GM12878 (cell line): ENCODE measurements at regions of chr6 and their contacts with region 1.

Region 1: GRCh38 chr6:116111552-116112528 is 11.2 kb downstream of the NT5DC1 start:
- DNase-seq: no peak
- ATAC-seq: peak; percentile 90
- H3K4me3 ChIP-seq: no peak overlapping the region
- H3K27ac ChIP-seq: no peak overlapping the region
- H3K4me1 ChIP-seq: peaks cover 2% of the 10 kb centered on the region; the same call in 1 of the 2 replicates
- H3K27me3 ChIP-seq: no peaks in the 10 kb centered on the region
- CTCF ChIP-seq: peak; percentile 59 to 78 (median 74)
- EP300 ChIP-seq: no peak
- POLR2A ChIP-seq: no peak
- RAD21 ChIP-seq: peak; percentile 65

Region 2: DNA sequence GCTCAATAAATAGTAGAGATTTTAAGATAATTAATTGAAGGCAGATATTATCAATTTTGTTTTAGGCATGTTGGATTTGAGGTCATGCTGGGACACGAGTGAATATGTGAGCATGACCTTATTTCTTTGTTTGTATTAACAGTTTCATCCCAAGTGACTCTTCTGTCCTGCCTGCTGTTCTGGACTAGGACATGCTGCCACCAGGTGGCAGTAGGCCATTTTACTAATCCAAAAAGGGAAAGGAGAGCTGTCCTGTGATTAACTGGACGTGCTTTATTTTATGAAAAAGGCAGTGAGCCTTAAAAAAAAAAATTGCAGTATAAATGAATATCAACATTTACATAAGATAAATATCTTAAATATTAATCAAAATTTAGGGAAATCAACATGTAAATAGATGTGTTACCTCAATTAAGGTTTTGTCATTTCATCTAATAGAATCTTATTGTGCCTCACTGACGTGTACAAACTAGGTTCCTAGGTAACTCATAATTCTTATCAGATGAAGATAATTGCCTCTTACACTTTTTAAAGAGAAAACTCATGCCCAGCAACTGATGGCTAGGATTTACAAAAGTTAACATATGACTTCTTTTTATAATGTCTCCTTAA is 100.9 kb before region 1 on chr6:
- CTCF ChIA-PET with region 1: interaction called, 106 read pairs
- POLR2A ChIA-PET with region 1: interaction called, 7 read pairs
- RAD21 ChIA-PET with region 1: interaction called, 39 read pairs
- SMC1A ChIA-PET with region 1: interaction called, 51 read pairs
- in situ Hi-C with region 1: no loop called
- intact Hi-C with region 1: no loop called
- DNase-seq: no peak
- ATAC-seq: peak; percentile 67
- H3K4me3 ChIP-seq: peak overlapping the region; percentile 9; the same call in 1 of the 2 replicates
- H3K27ac ChIP-seq: peak overlapping the region; percentile 59
- H3K4me1 ChIP-seq: peaks cover 53% of the 10 kb centered on the region
- H3K27me3 ChIP-seq: no peaks in the 10 kb centered on the region
- CTCF ChIP-seq: peak; percentile 82 to 88 (median 84)
- EP300 ChIP-seq: no peak
- POLR2A ChIP-seq: no peak
- RAD21 ChIP-seq: peak; percentile 95

Region 3: GRCh38 chr6:116073765-116074419 is 37.9 kb before region 1 on chr6:
- CTCF ChIA-PET with region 1: interaction called, 10 read pairs
- POLR2A ChIA-PET with region 1: no interaction called
- RAD21 ChIA-PET with region 1: no interaction called
- SMC1A ChIA-PET with region 1: no interaction called
- in situ Hi-C with region 1: no loop called
- intact Hi-C with region 1: no loop called
- DNase-seq: no peak
- ATAC-seq: no peak
- H3K4me3 ChIP-seq: no peak overlapping the region
- H3K27ac ChIP-seq: no peak overlapping the region
- H3K4me1 ChIP-seq: no peaks in the 10 kb centered on the region
- H3K27me3 ChIP-seq: no peaks in the 10 kb centered on the region
- CTCF ChIP-seq: no peak
- EP300 ChIP-seq: no peak
- POLR2A ChIP-seq: no peak
- RAD21 ChIP-seq: no peak

Region 4: DNA sequence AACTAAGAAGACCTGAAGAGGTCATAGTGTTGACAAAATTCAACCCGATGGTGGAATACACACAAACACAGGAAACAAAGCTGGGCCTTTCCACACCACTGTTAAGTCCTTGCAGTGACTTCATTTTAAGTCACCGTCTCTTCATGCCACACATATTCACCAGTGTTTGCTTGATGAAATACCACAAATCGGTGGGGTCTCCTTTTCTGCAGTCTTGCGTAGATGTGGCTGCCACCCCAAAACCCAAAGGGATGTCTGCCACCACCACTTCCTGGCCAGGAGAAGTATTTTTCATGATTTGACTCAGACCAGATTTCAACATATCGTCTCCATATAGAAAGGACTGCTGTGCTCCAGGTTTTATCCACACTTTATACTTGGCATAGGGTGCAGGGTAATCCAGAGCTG is 25.1 kb after region 1 on chr6:
- CTCF ChIA-PET with region 1: interaction called, 32 read pairs
- POLR2A ChIA-PET with region 1: no interaction called
- RAD21 ChIA-PET with region 1: interaction called, 4 read pairs
- SMC1A ChIA-PET with region 1: interaction called, 5 read pairs
- in situ Hi-C with region 1: no loop called
- intact Hi-C with region 1: no loop called
- DNase-seq: no peak
- ATAC-seq: no peak
- H3K4me3 ChIP-seq: no peak overlapping the region
- H3K27ac ChIP-seq: no peak overlapping the region
- H3K4me1 ChIP-seq: no peaks in the 10 kb centered on the region
- H3K27me3 ChIP-seq: no peaks in the 10 kb centered on the region
- CTCF ChIP-seq: no peak
- EP300 ChIP-seq: no peak
- POLR2A ChIP-seq: no peak
- RAD21 ChIP-seq: no peak

Region 5: GRCh38 chr6:116561377-116562018 is 449.7 kb after region 1 on chr6:
- CTCF ChIA-PET with region 1: interaction called, 4 read pairs
- POLR2A ChIA-PET with region 1: no interaction called
- RAD21 ChIA-PET with region 1: no interaction called
- SMC1A ChIA-PET with region 1: no interaction called
- in situ Hi-C with region 1: no loop called
- intact Hi-C with region 1: loop called (anchors 5 kb)
- DNase-seq: no peak
- ATAC-seq: peak; percentile 87
- H3K4me3 ChIP-seq: no peak overlapping the region
- H3K27ac ChIP-seq: no peak overlapping the region
- H3K4me1 ChIP-seq: no peaks in the 10 kb centered on the region
- H3K27me3 ChIP-seq: no peaks in the 10 kb centered on the region; a peak in 1 of 4 replicates
- CTCF ChIP-seq: peak; percentile 84 to 93 (median 88)
- EP300 ChIP-seq: no peak
- POLR2A ChIP-seq: no peak
- RAD21 ChIP-seq: peak; percentile 81